Activated naive CD4-positive, alpha-beta T cell treated with anti-CD3 and anti-CD28 coated beads, Interleukin-2, amount 10 ng/mL, durations not matched to agents 7 days and 5 days (primary cell): ENCODE measurements at regions of chr15 and their contacts with region 1.

Region 1: GRCh38 chr15:67303490-67304363 is 49.1 kb downstream of the IQCH start:
- DNase-seq: peak; percentile 38
- H3K4me3 Mint-ChIP-seq: no peak overlapping the region
- H3K27ac Mint-ChIP-seq: no peak overlapping the region
- H3K4me1 Mint-ChIP-seq: no peaks in the 10 kb centered on the region
- H3K27me3 Mint-ChIP-seq: peaks cover 3% of the 10 kb centered on the region

Region 2: DNA sequence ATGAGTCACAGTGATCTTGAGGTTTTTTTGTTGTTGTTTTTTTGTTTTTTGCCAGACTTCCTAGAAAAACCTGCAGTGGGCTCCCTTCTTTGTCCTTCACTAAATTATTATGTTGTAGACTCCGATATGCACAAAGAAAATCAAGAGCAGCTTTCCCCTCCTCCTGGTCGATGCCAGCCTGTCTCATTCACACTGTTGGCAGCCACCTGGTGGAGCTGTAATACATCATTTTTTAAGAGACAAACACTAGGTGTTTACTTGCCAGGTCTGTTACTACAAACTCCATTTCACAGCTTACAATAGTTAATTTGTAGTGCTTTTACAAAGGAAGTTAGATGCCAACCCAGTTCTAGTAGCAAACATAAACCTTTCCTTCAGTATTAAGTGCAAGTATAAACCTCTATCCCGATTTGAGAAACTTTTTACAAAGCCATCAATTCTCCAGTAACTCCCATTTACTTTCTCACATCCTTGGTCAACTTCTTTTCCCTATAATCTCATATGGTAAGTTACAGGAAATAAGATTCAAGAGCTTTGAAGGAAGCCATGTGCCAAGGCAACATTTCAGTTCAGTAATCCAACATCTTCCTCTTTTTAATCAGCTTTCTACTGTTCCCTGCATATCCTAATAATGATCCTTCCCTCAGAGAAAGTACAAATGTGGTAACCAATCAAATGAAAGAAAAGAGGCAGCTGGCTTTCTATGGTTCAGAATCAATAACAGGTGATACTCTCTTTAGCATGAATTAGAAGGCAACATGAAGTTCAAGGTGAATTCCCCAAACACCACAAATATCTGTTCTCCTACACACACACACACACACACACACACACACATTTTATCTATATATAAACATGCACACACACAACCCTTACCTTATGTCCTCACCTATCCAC is 63.2 kb before region 1 on chr15:
- CTCF ChIA-PET with region 1: interaction called, 18 read pairs
- DNase-seq: peak; percentile 51
- H3K4me3 Mint-ChIP-seq: peak overlapping the region; percentile 9
- H3K27ac Mint-ChIP-seq: peak overlapping the region; percentile 90
- H3K4me1 Mint-ChIP-seq: peaks cover 47% of the 10 kb centered on the region
- H3K27me3 Mint-ChIP-seq: no peaks in the 10 kb centered on the region

Region 3: DNA sequence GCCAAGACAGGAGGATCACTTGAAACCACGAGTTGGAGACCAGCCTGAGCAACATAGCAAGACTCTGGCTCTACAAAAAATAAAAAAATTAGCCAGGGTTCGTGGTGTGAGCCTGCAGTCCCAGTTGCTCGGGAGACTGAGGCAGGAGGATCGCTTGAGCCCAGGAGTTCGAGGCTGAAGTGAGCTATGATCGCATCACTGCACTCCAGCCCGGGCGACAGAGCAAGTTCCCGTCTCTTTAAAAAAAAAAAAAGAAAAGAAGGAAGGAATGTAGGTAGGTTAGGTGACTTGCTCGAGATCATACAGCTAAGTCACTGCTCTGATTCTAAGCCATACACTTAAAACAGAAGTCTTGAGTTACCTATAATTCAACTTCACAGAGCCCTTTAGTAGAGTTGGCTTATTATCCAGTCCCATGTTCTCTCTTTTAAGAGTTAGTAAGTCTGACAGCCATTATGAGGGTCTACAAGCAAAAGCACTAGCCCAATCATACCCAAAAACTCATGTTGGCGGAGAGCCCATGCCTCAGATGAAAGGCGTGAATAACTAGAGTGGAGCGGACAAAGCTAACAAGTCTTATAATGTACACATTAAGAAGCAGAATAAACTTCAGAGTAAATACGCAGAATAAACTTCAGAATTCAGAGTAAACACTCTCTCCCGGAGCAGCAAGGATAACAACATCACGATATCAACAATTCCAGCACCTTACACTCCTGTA is 50.0 kb before region 1 on chr15:
- CTCF ChIA-PET with region 1: no interaction called
- DNase-seq: no peak
- H3K4me3 Mint-ChIP-seq: peak overlapping the region; percentile 98
- H3K27ac Mint-ChIP-seq: peak overlapping the region; percentile 97
- H3K4me1 Mint-ChIP-seq: peaks cover 44% of the 10 kb centered on the region
- H3K27me3 Mint-ChIP-seq: peaks cover 14% of the 10 kb centered on the region